ENCODE measurements at regions of chr19 and their contacts with region 1.

Region 1: DNA sequence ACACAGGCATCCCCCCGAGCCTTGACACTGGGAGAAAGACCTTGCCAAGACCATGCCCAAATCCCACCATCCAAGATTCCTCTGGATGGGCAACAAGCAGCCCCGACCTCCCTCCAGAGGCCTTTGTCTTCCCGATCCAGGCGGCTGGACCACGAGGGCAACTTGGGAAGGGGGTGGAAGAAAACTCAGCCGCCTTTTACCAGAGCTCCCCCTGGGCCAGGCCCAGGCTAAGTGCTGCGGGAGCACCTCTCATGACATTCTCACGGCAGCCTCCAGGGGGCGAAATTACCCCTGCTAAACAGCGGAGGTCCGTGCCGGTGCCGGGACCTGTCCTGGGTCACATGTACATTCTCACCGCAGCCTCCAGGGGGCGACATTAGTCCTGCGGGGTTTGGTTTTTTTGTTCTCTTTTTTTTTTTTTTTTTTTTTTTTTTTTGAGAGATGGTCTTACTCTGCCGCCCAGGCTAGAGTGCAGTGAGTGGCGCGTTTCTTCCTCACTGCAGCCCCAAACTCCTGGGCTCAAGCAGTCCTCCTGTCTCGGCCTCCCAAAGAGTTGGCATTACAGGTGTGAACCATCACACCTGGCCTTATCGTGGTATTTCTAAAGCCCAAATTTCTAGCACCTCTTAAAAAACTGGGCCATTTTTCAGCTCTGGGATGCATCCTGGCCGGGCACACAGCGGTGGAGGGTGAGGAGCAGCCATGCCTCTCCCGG is 2.1 kb upstream of the RSPH6A start:
- DNase-seq: peak; percentile 63
- H3K4me3 ChIP-seq: no peak overlapping the region
- H3K27me3 ChIP-seq: no peaks in the 10 kb centered on the region
- CTCF ChIP-seq: peak; percentile 99

Region 2: GRCh38 chr19:45779231-45780145 is 37.7 kb before region 1 on chr19:
- CTCF ChIA-PET with region 1: interaction called, 16 read pairs
- POLR2A ChIA-PET with region 1: no interaction called
- DNase-seq: no peak
- H3K4me3 ChIP-seq: 0 out of 2 replicates have a peak overlapping the region, but pooled peaks have one; percentile 77
- H3K27me3 ChIP-seq: no peaks in the 10 kb centered on the region
- CTCF ChIP-seq: peak; percentile 32

Region 3: GRCh38 chr19:45798995-45799517 is 18.1 kb before region 1 on chr19:
- CTCF ChIA-PET with region 1: interaction called, 111 read pairs
- POLR2A ChIA-PET with region 1: interaction called, 4 read pairs
- DNase-seq: no peak
- H3K4me3 ChIP-seq: no peak overlapping the region
- H3K27me3 ChIP-seq: no peaks in the 10 kb centered on the region
- CTCF ChIP-seq: peak; percentile 81

Region 4: GRCh38 chr19:45842198-45842597 is 25.0 kb after region 1 on chr19:
- CTCF ChIA-PET with region 1: interaction called, 43 read pairs
- POLR2A ChIA-PET with region 1: no interaction called
- DNase-seq: no peak
- H3K4me3 ChIP-seq: no peak overlapping the region
- H3K27me3 ChIP-seq: no peaks in the 10 kb centered on the region
- CTCF ChIP-seq: no peak

Region 5: GRCh38 chr19:45886427-45887199 is 69.4 kb after region 1 on chr19:
- CTCF ChIA-PET with region 1: interaction called, 17 read pairs
- POLR2A ChIA-PET with region 1: interaction called, 7 read pairs
- DNase-seq: peak; percentile 49
- H3K4me3 ChIP-seq: peak overlapping the region; percentile 79
- H3K27me3 ChIP-seq: no peaks in the 10 kb centered on the region
- CTCF ChIP-seq: no peak